Aorta (tissue), 5 donors: ENCODE measurements at regions of chr10 and their contacts with region 1.

Region 1: GRCh38 chr10:111076191-111076681 is 593 bp upstream of the ADRA2A start:
- DNase-seq: peak; percentile 71 to 84
- ATAC-seq: peak; percentile 81
- H3K4me3 ChIP-seq: peak overlapping the region; percentile 30 to 38
- H3K27ac ChIP-seq: no peak overlapping the region
- H3K4me1 ChIP-seq: no peaks in the 10 kb centered on the region
- H3K27me3 ChIP-seq: no peaks in the 10 kb centered on the region

Region 2: DNA sequence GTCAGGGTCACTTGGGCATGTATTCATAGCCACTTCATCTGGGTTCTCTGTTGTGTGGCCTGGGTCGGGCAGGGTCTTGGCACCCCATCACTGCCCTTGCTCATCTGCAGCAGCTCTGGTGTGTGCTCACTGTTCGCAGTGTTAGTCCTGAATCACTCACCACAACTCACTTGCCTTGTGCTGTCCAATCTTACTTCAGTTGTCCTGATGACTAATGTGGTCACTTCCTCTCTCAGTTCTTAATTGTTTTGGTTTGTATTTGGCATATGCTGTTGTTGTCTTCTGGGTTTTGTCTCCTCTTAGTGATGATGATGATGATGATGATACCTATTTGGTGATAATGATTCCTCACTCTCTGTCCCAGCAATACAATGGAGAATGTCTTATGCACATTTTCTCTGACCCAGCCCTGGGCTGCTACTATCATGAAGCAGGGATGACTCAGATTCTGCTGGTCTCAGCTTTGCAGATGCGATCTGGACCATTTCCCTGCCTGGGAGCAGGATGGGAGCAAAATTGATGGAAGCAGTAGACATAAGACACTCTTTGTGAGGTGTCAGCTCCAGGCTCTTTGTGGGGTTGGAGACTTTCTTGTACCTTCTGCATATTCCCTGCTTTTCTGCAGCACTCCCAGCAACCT is 17.6 kb after region 1 on chr10:
- intact Hi-C with region 1: no loop called
- DNase-seq: no peak
- ATAC-seq: no peak
- H3K4me3 ChIP-seq: no peak overlapping the region
- H3K27ac ChIP-seq: no peak overlapping the region
- H3K4me1 ChIP-seq: no peaks in the 10 kb centered on the region
- H3K27me3 ChIP-seq: peaks cover 0 to 2% of the 10 kb centered on the region in 2 donors

Region 3: GRCh38 chr10:111598436-111599059 is 522.3 kb after region 1 on chr10:
- intact Hi-C with region 1: loop called in 1 of 2 experiments (anchors 5 kb)
- DNase-seq: peak in 1 of 2 donors; percentile 38
- ATAC-seq: peak; percentile 83
- H3K4me3 ChIP-seq: no peak overlapping the region
- H3K27ac ChIP-seq: no peak overlapping the region
- H3K4me1 ChIP-seq: no peaks in the 10 kb centered on the region
- H3K27me3 ChIP-seq: no peaks in the 10 kb centered on the region